Spleen (tissue), 13 donors: ENCODE measurements at regions of chr16 and their contacts with region 1.

Region 1: GRCh38 chr16:84175350-84176081 is 11.3 kb downstream of the TAF1C start:
- DNase-seq: peak; percentile 81
- H3K4me3 ChIP-seq: no peak overlapping the region
- H3K27ac ChIP-seq: peak overlapping the region; percentile 9 to 84 (median 75)
- H3K4me1 ChIP-seq: peaks cover 22 to 59% (median 43%) of the 10 kb centered on the region in 6 donors
- H3K27me3 ChIP-seq: peaks cover 0 to 3% (median 0%) of the 10 kb centered on the region in 7 donors
- CTCF ChIP-seq: peak; percentile 35 to 93 (median 84)
- POLR2A ChIP-seq: peak in 1 of 3 donors; percentile 8

Region 2: DNA sequence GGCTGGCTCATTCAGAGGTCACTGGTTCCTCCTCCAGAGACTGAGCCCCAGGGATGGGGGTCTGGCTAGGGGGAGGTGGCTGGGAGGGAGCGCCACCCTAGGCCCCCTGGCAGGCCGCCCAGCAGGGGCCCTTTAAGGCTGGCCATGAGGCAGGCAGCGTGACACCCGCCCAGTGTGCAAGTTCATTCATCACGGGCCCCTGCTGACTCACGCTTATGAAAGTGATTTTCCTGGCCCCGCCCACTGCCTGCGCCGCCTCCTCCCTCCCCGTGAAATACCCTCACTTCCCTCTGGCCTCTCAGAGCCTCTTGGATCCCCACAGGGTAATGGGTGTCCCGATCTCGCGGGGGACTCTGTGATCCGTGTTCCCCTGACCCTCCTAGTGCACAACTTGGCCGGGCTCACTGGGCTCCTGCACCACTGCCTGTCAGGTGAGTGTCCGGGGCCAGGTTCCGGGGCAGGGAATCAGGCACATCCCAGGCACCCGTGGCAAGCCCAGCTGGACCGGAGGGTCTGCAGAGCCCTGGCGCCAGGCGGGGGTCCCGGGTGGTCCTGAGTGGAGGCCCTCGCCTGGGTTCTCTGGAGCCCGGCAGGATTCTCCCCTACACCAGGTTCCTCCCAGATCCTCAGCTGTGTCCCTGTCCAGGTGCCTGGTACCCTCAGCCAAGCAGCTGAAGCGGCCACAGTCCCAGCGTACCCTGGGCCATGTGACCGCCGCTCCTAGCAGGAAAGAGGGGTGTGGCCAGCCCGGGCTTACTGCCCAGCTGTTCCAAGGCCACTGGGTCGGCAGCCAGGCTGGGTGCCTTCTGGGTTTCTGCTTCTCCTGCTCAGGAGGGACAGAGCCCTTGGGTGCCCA is 222.3 kb before region 1 on chr16 and contains the start of gene OSGIN1:
- intact Hi-C with region 1: loop called (anchors 10 kb)
- DNase-seq: peak; percentile 94
- H3K4me3 ChIP-seq: peak within 1 kb of the TSS; percentile 29 to 77 (median 48)
- H3K27ac ChIP-seq: peak within 1 kb of the TSS; percentile 68 to 95 (median 88)
- H3K4me1 ChIP-seq: peaks cover 0 to 51% (median 34%) of the 10 kb centered on the region in 6 donors
- H3K27me3 ChIP-seq: peaks cover 0 to 44% (median 5%) of the 10 kb centered on the region in 7 donors
- CTCF ChIP-seq: peak in 1 of 11 experiments; percentile 11
- POLR2A ChIP-seq: peak in 1 of 3 donors; percentile 87
- total RNA-seq, gene OSGIN1: 4.7 to 13.5 (median 9.5) TPM

Region 3: DNA sequence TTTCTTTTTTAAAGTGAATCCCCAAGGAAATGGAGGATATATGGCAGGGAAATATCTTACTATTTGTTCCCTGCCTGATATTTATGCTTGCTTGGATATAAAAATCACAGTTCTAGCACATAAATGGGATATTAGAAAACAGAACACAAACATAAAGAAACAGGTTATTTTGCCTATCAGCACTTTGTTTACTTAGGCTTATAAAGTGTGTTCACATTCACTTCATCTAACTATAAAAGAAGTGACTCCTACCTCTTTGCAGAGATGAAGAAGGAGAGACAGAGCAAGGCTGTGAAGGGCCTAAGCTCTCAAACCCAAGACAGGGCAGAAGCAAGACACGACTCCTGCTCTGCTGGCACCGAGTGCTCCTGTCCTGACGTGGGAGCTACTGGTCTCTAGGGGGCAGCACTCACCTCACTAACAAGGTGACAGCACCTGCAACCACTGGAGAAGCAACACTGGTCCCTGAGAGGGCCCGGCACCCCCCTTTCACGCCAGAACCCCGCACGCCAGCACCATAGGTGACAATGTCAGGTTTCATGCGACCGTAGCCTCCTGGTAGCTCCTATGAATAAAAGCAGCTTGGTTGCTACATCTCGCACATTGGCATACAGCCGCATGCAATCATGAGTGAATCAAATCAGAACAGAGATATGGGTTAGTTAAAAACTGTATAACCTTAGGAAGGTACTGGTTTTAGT is 90.8 kb before region 1 on chr16:
- intact Hi-C with region 1: loop called (anchors 10 kb)
- DNase-seq: peak; percentile 84
- H3K4me3 ChIP-seq: no peak overlapping the region
- H3K27ac ChIP-seq: peak overlapping the region in 2 of 8 donors; percentile 9 to 50
- H3K4me1 ChIP-seq: peaks cover 0 to 92% (median 49%) of the 10 kb centered on the region in 6 donors
- H3K27me3 ChIP-seq: no peaks in the 10 kb centered on the region
- CTCF ChIP-seq: peak; percentile 21 to 82 (median 65)
- POLR2A ChIP-seq: no peak